ENCODE measurements at regions of chr15 and their contacts with region 1.

Region 1: DNA sequence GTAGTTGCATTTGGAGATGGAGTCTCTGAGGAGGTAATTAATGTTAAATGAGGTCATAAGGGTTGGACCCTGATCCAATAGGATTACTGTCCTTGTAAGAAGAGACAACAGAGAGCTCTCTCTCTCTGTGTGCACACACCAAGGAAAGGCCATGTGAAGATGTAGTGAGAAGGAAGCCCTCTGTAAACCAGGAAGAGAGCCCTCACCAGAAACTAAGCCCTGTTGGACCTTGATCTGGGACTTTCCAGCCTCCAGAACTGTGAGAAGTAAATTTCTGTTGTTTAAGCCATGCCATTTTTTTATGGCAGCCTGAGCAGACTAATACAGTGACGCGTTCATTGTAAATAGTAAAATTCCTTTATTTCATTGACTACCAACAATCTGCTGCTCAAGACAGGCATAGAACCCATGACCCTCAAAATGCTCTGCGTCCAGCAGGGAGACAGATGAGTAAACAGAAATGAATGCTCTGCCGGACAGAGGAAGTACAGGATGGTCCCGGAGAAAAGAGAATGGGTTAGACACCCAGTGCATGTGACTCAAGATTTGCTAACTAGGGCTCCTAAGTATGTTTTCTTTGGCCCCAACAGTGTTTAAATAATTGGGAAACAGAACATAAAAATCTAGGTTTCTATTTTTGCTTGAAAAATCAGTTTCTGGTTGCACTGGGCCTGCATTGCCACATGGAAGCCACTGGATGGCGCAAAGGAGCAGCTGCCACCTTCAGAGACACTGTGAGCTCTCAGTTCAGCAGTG is 37.9 kb upstream of the TNFAIP8L3 start:
- DNase-seq: peak; percentile 95
- H3K4me3 ChIP-seq: no peak overlapping the region
- CTCF ChIP-seq: peak; percentile 94

Region 2: DNA sequence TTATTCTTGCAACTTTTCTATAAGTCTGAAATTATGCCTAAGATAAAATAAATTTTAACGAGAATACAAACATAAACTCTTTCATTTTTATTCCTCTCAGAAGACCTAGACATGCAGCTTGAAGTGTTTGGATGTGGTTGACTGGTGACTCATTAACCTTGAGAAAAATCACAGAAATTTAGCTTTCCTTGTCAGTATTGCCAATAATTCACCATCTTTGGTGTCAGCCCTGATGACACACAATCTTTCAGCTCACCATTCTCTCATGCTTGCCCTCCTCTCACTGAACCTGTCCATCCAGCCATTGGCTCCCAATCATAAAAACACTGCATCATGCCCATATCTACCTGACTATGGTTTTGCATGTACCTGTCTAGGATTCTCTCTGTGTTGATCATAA is 15.3 kb before region 1 on chr15:
- CTCF ChIA-PET with region 1: interaction called, 13 read pairs
- POLR2A ChIA-PET with region 1: interaction called, 3 read pairs
- DNase-seq: no peak
- H3K4me3 ChIP-seq: no peak overlapping the region
- CTCF ChIP-seq: no peak

Region 3: DNA sequence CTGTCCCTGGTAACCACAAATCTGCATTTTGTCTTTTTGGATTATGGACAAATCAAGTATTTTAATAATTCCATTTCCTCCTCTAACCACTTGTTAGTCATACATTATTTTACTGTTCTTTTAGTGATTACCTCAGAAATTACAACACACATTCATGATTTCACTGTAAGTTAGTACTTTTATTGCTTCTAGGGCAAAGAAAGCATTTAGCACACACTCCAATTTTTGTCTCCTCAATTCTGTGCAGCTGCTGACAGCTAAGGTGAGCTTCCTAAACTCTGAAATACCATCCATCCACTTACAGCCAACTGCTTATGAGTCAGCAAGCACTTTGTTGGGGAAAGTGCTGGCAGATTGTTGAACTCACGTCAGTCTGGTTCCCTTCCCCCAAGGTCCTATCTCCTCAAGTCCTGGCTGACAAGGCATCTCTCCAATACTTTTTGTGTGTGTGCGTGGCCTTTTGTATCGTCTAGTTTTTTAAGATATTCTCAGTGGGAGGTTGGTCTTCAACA is 11.5 kb after region 1 on chr15:
- CTCF ChIA-PET with region 1: interaction called, 53 read pairs
- POLR2A ChIA-PET with region 1: no interaction called
- DNase-seq: no peak
- H3K4me3 ChIP-seq: no peak overlapping the region
- CTCF ChIP-seq: no peak

Region 4: GRCh38 chr15:51227940-51228783 is 95.6 kb after region 1 on chr15:
- CTCF ChIA-PET with region 1: interaction called, 16 read pairs
- POLR2A ChIA-PET with region 1: no interaction called
- DNase-seq: peak; percentile 52
- H3K4me3 ChIP-seq: no peak overlapping the region
- CTCF ChIP-seq: no peak

Measured in AG04449 (cell line).